ENCODE measurements at regions of chr22 and their contacts with region 1.

Region 1: GRCh38 chr22:50244420-50245213 is at the start of gene TUBGCP6:
- DNase-seq: peak; percentile 63 to 93 (median 74)
- ATAC-seq: peak; percentile 82
- H3K4me3 ChIP-seq: peak within 1 kb of the TSS; percentile 76
- H3K27ac ChIP-seq: peak within 1 kb of the TSS; percentile 81
- H3K4me1 ChIP-seq: peaks cover 9 to 61% of the 10 kb centered on the region in 2 experiments
- H3K27me3 ChIP-seq: no peaks in the 10 kb centered on the region
- CTCF ChIP-seq: peak in 1 of 3 experiments; percentile 43; a peak in 1 of 6 replicates
- EP300 ChIP-seq: no peak
- POLR2A ChIP-seq: peak; percentile 83
- RAD21 ChIP-seq: no peak
- polyA plus RNA-seq, gene TUBGCP6: 0.76 to 1.2 TPM

Region 2: DNA sequence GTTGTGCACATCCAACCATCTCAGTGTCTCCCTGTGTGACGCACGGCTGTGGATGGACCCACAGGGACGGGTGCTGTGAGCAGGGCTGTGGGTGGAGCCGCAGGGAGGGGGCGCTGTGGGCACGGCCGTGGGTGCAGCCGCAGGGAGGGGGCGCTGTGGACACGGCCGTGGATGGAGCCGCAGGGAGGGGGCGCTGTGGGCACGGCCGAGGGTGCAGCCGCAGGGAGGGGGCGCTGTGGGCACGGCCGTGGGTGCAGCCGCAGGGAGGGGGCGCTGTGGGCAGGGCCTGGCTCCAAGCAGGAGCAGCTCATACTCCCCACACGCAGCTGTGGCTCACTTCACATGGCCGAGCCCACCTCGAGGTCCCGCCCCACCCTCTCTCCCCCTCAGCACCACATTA is 31.5 kb after region 1 on chr22:
- CTCF ChIA-PET with region 1: no interaction called
- POLR2A ChIA-PET with region 1: no interaction called
- in situ Hi-C with region 1: no loop called
- intact Hi-C with region 1: no loop called
- DNase-seq: peak in 2 of 4 experiments; percentile 21 to 41
- ATAC-seq: peak; percentile 32
- H3K4me3 ChIP-seq: no peak overlapping the region
- H3K27ac ChIP-seq: no peak overlapping the region
- H3K4me1 ChIP-seq: peaks cover 0 to 41% of the 10 kb centered on the region in 2 experiments; a peak in 3 of 5 replicates
- H3K27me3 ChIP-seq: no peaks in the 10 kb centered on the region
- CTCF ChIP-seq: peak; percentile 44 to 99 (median 76); a peak in 4 of 6 replicates
- EP300 ChIP-seq: no peak
- POLR2A ChIP-seq: no peak
- RAD21 ChIP-seq: no peak

Region 3: GRCh38 chr22:50341977-50342650 is 97.5 kb after region 1 on chr22:
- CTCF ChIA-PET with region 1: interaction called, 5 read pairs
- POLR2A ChIA-PET with region 1: interaction called, 3 read pairs
- in situ Hi-C with region 1: loop called (anchors 5 kb)
- intact Hi-C with region 1: loop called (anchors 1 kb)
- DNase-seq: peak; percentile 58 to 89 (median 64)
- ATAC-seq: peak; percentile 89
- H3K4me3 ChIP-seq: peak overlapping the region; percentile 77
- H3K27ac ChIP-seq: peak overlapping the region; percentile 86
- H3K4me1 ChIP-seq: peaks cover 3 to 56% of the 10 kb centered on the region in 2 experiments; a peak in 4 of 5 replicates
- H3K27me3 ChIP-seq: no peaks in the 10 kb centered on the region
- CTCF ChIP-seq: peak; percentile 86 to 95 (median 90)
- EP300 ChIP-seq: 0 out of 2 replicates have a peak, but pooled peaks have one; percentile 4
- POLR2A ChIP-seq: no peak
- RAD21 ChIP-seq: peak; percentile 75 to 83

Region 4: DNA sequence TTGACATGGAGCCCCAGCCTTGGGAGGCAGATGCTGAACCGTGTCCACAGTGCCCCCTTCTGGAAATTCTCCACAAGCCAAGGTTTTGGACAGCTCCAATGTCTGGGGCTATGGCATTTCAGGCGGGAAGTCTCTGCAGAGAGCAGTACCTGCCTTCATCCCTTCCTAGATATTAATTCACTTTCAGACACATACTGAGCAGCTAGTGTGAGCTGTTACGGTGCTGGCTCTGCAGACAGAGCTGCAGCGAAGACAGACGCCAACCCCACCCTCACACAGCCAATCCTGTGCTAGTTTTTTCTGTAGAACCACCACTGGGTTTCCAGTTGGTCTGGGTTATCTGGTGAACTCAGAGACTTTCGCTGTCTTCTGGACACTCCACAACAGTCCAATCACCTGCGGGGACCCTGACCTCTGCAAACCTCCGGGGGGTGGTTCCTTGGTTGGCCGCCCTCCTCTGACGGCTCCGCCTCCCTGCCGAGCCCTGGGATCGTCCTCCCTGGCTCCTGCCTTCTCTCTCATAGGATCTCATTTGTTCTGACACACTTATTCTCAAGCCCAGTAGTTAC is 253.8 kb after region 1 on chr22:
- CTCF ChIA-PET with region 1: no interaction called
- POLR2A ChIA-PET with region 1: no interaction called
- in situ Hi-C with region 1: no loop called
- intact Hi-C with region 1: loop called (anchors 5 kb)
- DNase-seq: peak; percentile 60 to 89 (median 76)
- ATAC-seq: peak; percentile 98
- H3K4me3 ChIP-seq: peak overlapping the region; percentile 23
- H3K27ac ChIP-seq: peak overlapping the region; percentile 57
- H3K4me1 ChIP-seq: peaks cover 3 to 16% of the 10 kb centered on the region in 2 experiments; a peak in 2 of 5 replicates
- H3K27me3 ChIP-seq: no peaks in the 10 kb centered on the region
- CTCF ChIP-seq: peak; percentile 78 to 85 (median 82)
- EP300 ChIP-seq: no peak
- POLR2A ChIP-seq: no peak
- RAD21 ChIP-seq: peak; percentile 58 to 69

Measured in K562 (cell line).